ENCODE measurements at regions of chr17 and their contacts with region 1.

Region 1: GRCh38 chr17:76506408-76507349 is 5.5 kb upstream of the RHBDF2 start:
- DNase-seq: peak; percentile 92
- ATAC-seq: peak; percentile 81

Region 2: DNA sequence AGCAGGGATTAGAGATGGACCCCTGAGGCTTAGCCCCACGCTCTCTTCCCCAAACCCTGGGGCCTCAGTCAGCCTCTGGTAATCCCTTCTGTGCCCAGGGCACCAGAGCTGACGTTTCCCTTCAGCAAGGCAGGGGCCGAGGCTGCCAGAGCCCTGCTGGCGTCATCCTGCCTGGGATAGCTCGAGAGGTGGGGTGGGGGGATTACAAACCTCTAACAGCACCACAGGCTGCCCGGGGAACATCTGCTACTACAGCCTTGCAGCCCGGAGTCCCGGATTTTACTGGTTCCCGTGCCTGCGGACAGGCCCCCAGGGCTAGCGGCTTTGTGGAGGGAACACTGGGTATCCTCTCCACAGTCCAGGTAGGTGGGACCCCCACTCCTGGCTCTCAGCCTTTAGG is 39.3 kb before region 1 on chr17 and contains the start of gene AANAT:
- intact Hi-C with region 1: loop called (anchors 5 kb)
- DNase-seq: no peak
- ATAC-seq: no peak
- total RNA-seq, gene AANAT: not detected

Region 3: DNA sequence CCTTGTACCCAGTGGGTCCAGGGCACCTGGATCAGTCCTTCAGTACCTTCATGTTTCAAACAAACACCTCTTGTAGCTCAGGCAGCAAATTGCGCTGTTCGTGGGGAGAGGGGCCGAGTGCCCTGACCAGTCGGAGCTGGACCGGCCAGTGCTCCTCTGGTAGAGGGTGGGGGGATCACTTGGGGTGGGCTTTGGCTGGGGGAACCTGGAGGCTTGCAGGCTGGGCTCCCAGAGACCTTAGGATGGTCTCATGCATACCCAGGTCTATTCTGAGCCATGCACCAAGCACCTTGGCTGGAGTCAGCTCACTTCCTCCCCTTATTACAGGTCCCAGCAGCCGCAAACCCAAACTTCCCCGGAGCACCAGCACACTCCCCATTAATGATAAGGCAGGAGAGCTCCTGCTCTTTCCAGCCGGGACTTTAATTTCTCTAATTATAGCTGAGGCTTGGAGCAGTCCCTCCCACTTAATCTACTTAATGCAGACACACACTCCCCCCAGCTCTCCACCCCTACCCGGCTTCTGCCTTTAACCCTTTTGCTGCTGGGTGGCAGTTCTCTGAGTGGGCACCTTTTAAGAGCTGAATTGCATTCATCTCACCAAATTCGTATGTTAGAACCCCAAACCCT is 335.2 kb after region 1 on chr17:
- intact Hi-C with region 1: no loop called
- DNase-seq: no peak
- ATAC-seq: no peak

Measured in sciatic nerve (tissue), 2 donors.